Activated naive CD8-positive, alpha-beta T cell treated with anti-CD3 and anti-CD28 coated beads, Interleukin-2, amount 10 ng/mL, durations not matched to agents 7 days and 5 days (primary cell): ENCODE measurements at regions of chr20 and their contacts with region 1.

Region 1: DNA sequence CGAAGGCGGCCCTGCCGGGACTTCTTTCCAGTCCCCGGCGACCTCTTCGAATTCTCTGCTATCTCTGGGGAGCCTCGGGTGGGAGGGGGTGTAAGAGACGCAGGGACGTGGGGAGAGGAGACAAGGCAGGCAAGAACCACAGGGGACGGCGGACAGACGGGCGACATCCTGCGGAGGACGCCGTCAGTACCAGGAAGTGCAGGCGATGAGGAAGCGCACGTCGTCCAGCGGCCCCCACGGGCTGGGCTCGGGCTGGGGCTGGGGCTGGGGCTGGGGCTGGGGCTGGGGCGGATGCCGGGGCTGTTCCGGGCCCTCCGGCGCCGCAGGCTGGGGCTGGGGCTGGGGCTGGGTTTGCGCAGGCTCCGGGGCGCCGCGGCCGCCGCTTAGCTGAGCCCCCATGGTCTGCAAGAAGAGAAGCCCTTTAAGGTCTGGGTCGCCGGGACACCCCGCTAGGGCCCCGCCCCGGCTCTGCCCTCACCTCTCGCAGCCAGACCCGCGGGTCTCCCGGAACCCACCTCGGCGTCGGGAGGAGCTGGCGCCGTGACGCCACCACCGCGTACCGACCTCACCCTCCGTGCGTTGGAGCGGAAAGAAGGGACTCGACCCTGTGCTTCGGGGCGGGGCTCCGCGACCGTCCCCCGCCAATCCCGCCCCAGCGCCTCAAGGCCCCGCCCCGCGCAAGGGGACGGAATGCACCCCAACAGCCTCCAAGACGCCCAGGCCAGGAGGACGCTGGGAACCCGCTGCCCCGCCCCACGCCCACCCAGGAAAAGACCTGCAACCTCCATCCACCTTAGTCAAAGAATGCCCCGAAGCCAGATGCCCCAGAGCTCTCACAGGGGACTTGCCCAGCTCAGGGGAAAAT is at the start of gene MMP24OS:
- DNase-seq: peak; percentile 91
- ATAC-seq: peak; percentile 91
- H3K4me3 Mint-ChIP-seq: peak within 1 kb of the TSS; percentile 100
- H3K27ac Mint-ChIP-seq: peak within 1 kb of the TSS; percentile 100
- H3K4me1 Mint-ChIP-seq: peaks cover 12% of the 10 kb centered on the region
- H3K27me3 Mint-ChIP-seq: no peaks in the 10 kb centered on the region
- total RNA-seq, gene MMP24OS: 64.3 to 70.1 TPM

Region 2: DNA sequence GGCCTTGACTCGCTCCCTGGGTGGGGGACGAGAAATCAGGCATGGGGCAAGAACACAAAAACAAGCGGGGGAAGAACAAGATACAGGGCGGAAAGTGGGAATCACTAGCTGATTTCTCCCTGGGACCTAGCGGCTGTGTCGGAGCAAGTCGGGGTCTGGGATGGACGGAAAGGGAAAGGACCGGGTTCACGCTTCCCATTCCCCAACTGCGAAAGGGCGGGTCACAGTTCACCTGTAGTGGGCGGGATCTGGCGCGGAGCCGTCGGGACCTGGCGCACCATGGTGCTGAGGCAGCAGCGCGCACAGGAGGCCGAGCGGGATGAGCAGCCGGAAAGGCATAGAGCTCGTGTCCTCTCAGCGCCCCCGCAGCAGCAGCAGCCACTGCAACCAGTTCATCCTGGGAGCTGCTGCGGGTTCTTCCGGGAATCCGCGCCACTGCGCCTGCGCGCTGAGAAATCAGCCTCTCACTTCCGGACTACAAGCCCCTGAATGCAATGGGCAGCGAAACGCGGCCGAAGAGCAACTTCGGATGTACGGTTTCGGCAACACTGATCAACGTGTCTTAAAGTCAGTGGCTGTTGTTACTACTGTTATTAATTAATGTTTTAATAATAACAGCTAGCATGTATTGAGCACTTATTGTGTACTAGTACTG is 130.7 kb before region 1 on chr20 and contains the start of gene EDEM2:
- POLR2A ChIA-PET with region 1: interaction called, 10 read pairs
- DNase-seq: peak; percentile 95
- ATAC-seq: peak; percentile 91
- H3K4me3 Mint-ChIP-seq: peak within 1 kb of the TSS; percentile 92
- H3K27ac Mint-ChIP-seq: peak within 1 kb of the TSS; percentile 79
- H3K4me1 Mint-ChIP-seq: peaks cover 22% of the 10 kb centered on the region
- H3K27me3 Mint-ChIP-seq: no peaks in the 10 kb centered on the region
- total RNA-seq, gene EDEM2: 23.4 to 24.2 TPM

Region 3: GRCh38 chr20:35171753-35172433 is 105.9 kb before region 1 on chr20 and contains the start of gene PROCR:
- POLR2A ChIA-PET with region 1: no interaction called
- DNase-seq: peak; percentile 41
- ATAC-seq: peak; percentile 79
- H3K4me3 Mint-ChIP-seq: peak within 1 kb of the TSS; percentile 88
- H3K27ac Mint-ChIP-seq: peak within 1 kb of the TSS; percentile 78
- H3K4me1 Mint-ChIP-seq: peaks cover 14% of the 10 kb centered on the region
- H3K27me3 Mint-ChIP-seq: no peaks in the 10 kb centered on the region
- total RNA-seq, gene PROCR: 2.1 to 2.4 TPM

Region 4: DNA sequence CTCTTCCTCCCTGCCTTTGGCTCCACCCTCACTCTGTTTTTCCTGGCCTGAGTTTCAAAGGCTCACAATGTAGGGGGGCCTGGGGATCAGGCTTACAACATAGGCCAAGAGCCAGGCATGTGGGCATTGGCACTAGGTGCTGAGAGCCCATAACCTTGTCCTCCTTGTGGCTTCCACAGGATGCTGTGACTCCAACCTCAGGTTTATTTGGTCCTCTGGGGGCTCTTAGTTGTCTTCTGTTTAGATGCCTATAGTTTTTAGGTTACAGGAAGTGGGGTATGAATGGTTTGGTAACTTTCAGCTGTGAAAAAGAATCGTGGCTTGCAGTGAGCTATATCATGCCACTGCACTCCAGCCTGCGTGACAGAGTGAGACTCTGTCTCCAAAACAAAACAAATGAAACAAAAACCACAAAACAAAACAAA is 25.7 kb before region 1 on chr20:
- POLR2A ChIA-PET with region 1: interaction called, 16 read pairs
- DNase-seq: peak; percentile 51
- ATAC-seq: peak; percentile 92
- H3K4me3 Mint-ChIP-seq: peak overlapping the region; percentile 72
- H3K27ac Mint-ChIP-seq: peak overlapping the region; percentile 99
- H3K4me1 Mint-ChIP-seq: peaks cover 23% of the 10 kb centered on the region
- H3K27me3 Mint-ChIP-seq: peaks cover 3% of the 10 kb centered on the region

Region 5: DNA sequence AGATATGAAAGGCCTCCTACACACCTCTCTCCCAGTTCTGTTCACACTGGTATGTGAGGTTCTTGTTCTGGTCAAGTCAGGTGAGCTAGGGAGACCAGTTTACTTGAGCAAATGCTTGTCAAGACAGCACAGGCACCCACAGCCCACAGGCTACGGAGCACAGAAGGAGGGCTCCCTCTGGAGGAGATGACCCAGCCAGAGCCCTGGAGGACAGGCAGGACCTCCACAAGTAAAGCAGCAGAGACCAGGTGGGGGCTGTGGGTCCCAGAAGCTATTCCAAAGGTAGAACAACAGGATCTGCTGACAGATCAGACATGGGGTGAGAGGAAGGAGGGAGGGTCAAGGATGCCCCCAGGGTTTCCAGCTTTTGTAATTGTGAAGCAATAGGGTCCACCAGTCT is 13.0 kb before region 1 on chr20:
- POLR2A ChIA-PET with region 1: interaction called, 13 read pairs
- DNase-seq: no peak
- ATAC-seq: no peak
- H3K4me3 Mint-ChIP-seq: no peak overlapping the region
- H3K27ac Mint-ChIP-seq: no peak overlapping the region
- H3K4me1 Mint-ChIP-seq: peaks cover 2% of the 10 kb centered on the region
- H3K27me3 Mint-ChIP-seq: no peaks in the 10 kb centered on the region

Region 6: DNA sequence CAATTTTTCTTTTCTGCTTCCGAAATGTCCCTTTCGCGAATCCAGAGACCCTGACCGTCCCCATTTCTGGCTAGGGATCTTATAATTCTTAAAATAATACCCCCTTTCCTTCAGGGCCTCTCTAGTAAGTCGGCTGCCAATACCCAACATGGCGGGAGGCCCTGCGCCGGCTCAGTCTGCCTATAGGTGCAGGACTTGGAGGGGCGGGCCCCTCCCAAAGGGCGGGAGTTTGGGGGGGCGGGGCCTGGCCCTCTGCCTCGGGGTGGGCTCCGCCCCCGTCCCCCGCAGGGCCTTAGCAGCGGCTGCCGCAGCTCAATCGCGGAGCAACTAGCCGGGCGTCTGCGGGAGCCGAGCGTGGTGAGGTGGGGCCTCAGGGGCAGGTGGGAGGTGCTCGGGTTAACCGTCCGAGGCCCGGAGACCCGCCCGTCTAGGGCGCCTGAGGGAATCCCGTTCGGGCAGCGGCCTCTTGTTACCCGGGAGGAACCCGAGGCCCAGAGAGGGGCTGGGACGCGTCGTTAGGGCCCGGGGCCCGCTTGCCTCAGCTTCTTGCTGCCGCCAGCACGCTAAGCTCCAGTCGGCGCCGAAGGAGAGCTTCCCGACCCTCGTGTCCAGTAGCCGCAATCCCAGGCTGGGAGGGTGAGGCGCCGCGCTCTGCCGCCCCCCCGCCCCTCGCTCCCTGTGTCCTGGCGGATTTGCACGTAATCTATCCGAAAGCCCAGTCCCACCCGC is 177.3 kb after region 1 on chr20 and contains the start of gene CEP250:
- POLR2A ChIA-PET with region 1: interaction called, 10 read pairs
- DNase-seq: peak; percentile 95
- ATAC-seq: peak; percentile 93
- H3K4me3 Mint-ChIP-seq: peak within 1 kb of the TSS; percentile 90
- H3K27ac Mint-ChIP-seq: peak within 1 kb of the TSS; percentile 96
- H3K4me1 Mint-ChIP-seq: peaks cover 24% of the 10 kb centered on the region
- H3K27me3 Mint-ChIP-seq: no peaks in the 10 kb centered on the region
- total RNA-seq, gene CEP250: 82.9 to 84.5 TPM